A549 (cell line): ENCODE measurements at regions of chr1 and their contacts with region 1.

Region 1: GRCh38 chr1:208029381-208030287 is 118.7 kb upstream of the CD34 start:
- DNase-seq: no peak
- ATAC-seq: no peak; a peak in 1 of 6 replicates
- H3K4me3 ChIP-seq: no peak overlapping the region
- H3K27ac ChIP-seq: no peak overlapping the region
- H3K4me1 ChIP-seq: no peaks in the 10 kb centered on the region
- CTCF ChIP-seq: no peak
- EP300 ChIP-seq: no peak
- POLR2A ChIP-seq: no peak
- RAD21 ChIP-seq: no peak

Region 2: DNA sequence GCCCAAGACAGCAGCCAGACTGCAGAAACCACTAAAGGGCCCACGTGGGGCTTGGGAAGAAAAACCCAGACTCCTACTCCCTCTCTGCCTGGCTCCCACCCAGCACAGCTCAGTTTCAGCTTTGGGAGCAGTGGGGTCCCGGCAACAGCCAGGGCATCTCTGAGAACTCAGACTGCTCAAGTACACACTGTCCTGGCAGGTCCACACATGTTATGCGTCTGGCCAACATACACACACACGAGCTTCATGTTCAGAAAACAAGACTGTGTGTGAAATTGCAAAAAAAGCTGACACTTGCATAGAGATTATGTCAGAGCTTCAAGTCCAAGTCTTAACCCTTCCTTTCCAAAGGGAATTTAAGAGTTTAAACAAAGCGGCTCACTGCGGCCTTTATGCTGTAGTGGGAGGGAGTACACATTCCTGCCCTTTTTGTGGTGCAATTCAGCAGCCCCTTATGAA is 17.9 kb after region 1 on chr1:
- CTCF ChIA-PET with region 1: interaction called, 10 read pairs
- POLR2A ChIA-PET with region 1: no interaction called
- DNase-seq: no peak
- ATAC-seq: no peak
- H3K4me3 ChIP-seq: no peak overlapping the region
- H3K27ac ChIP-seq: no peak overlapping the region
- H3K4me1 ChIP-seq: no peaks in the 10 kb centered on the region; the same call in 2 of the 3 replicates
- CTCF ChIP-seq: no peak
- EP300 ChIP-seq: no peak
- POLR2A ChIP-seq: no peak
- RAD21 ChIP-seq: no peak

Region 3: GRCh38 chr1:208251911-208252835 is 222.5 kb after region 1 on chr1:
- CTCF ChIA-PET with region 1: interaction called, 358 read pairs
- POLR2A ChIA-PET with region 1: no interaction called
- DNase-seq: peak; percentile 50 to 85
- ATAC-seq: peak; percentile 83 to 93
- H3K4me3 ChIP-seq: no peak overlapping the region
- H3K27ac ChIP-seq: no peak overlapping the region
- H3K4me1 ChIP-seq: peaks cover 4% of the 10 kb centered on the region; the same call in 1 of the 3 replicates
- CTCF ChIP-seq: peak; percentile 62
- EP300 ChIP-seq: no peak
- POLR2A ChIP-seq: no peak
- RAD21 ChIP-seq: peak; percentile 71 to 75